Adrenal gland (tissue), 19 donors: ENCODE measurements at regions of chr16 and their contacts with region 1.

Region 1: DNA sequence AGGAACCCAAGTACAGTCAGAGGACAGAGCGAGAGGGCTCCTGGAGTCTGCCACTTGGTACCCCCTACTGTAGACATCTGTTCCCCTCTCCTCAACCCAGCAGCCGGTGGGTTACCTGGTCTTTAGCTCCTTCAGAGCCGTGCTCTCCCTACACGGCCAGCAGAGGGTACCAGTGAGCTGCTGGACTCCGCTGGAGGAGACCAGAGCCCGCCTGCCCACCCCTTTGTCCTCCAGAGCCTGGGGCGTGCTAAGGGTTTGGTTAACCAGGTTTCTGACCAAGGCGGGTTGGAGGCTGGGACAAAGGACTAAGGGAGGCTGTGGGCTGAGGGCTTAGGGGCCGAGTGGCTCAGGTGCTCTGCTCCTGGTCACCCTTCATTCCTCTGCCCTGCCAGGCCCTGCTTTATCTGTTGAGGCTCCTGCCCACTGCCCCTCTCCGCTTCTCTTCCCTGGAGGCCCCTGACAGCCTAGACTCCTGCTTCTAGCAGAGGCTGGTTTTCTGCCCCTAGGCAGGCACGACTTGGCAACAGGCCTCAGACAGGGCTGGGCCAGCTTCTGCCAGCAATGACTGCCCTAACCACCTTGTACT is 2.7 kb upstream of the HSD11B2 start:
- DNase-seq: peak; percentile 63 to 87 (median 83)
- H3K4me3 ChIP-seq: no peak overlapping the region
- H3K27ac ChIP-seq: no peak overlapping the region
- H3K4me1 ChIP-seq: peaks cover 12 to 26% of the 10 kb centered on the region in 2 donors
- H3K27me3 ChIP-seq: peaks cover 3% of the 10 kb centered on the region
- CTCF ChIP-seq: peak; percentile 77 to 94 (median 86)
- POLR2A ChIP-seq: no peak

Region 2: GRCh38 chr16:67468731-67469130 is 40.5 kb after region 1 on chr16:
- intact Hi-C with region 1: loop called (anchors 2 kb)
- DNase-seq: no peak
- H3K4me3 ChIP-seq: no peak overlapping the region
- H3K27ac ChIP-seq: no peak overlapping the region
- H3K4me1 ChIP-seq: peaks cover 38 to 50% of the 10 kb centered on the region in 2 donors
- H3K27me3 ChIP-seq: no peaks in the 10 kb centered on the region
- CTCF ChIP-seq: no peak
- POLR2A ChIP-seq: no peak